Posterior vena cava (tissue), 2 donors: ENCODE measurements at regions of chr1 and their contacts with region 1.

Region 1: DNA sequence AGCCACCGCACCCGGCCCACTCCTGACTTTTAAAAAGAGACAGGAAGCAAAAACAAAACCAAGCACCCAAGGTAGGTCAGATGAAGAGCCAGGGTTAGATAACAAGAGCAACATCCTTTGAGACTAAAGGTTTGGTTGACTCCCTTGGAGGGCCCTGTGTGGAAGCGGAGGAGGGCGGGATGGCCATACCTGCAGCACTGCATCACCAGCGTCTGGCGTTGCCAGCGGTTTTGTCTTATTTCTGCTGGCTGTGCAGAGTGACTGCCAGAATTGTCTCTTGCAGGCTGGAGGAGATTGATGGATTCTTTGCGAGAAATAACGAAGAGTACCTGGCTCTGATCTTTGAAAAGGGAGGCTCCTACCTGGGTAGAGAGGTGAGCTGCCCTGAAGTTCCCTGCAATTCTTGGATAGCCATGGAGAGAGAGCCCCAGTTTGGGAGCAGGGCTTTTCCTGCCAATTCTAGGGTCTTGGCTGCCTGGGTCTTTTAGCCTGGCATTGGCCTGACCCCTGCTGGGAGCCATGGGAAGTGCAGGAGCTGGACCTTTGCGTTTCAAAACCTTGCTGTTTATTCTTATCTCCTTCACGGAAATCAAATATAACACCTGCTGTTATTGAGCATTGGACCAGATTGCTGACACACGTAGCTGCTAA is 24.0 kb downstream of the QSOX1 start:
- DNase-seq: peak; percentile 88

Region 2: GRCh38 chr1:180116964-180117763 is 61.5 kb before region 1 on chr1:
- intact Hi-C with region 1: loop called in 1 of 2 experiments (anchors 10 kb)
- DNase-seq: no peak

Region 3: GRCh38 chr1:180195916-180196315 is 17.3 kb after region 1 on chr1:
- intact Hi-C with region 1: loop called in 1 of 2 experiments (anchors 1 kb)
- DNase-seq: no peak